Caco-2 (cell line): ENCODE measurements at regions of chr12 and their contacts with region 1.

Region 1: GRCh38 chr12:57111031-57111734 is at the start of gene STAT6:
- DNase-seq: peak in 1 of 2 experiments; percentile 53
- H3K4me3 ChIP-seq: peak within 1 kb of the TSS; percentile 43
- H3K4me3 Mint-ChIP-seq: peak within 1 kb of the TSS; percentile 89
- H3K27ac Mint-ChIP-seq: peak within 1 kb of the TSS; percentile 84
- H3K4me1 ChIP-seq: 0 out of 2 replicates have a peak, but pooled peaks cover 3% of the 10 kb centered on the region
- H3K4me1 Mint-ChIP-seq: peaks cover 13% of the 10 kb centered on the region
- H3K27me3 ChIP-seq: no peaks in the 10 kb centered on the region
- H3K27me3 Mint-ChIP-seq: no peaks in the 10 kb centered on the region
- CTCF ChIP-seq: no peak
- total RNA-seq, gene STAT6: 44.2 and 49.5 TPM in 2 replicates

Region 2: GRCh38 chr12:55908726-55909512 is 1202.3 kb before region 1 on chr12:
- CTCF ChIA-PET with region 1: no interaction called
- POLR2A ChIA-PET with region 1: no interaction called
- intact Hi-C with region 1: no loop called
- DNase-seq: peak; percentile 40 to 59
- H3K4me3 ChIP-seq: no peak overlapping the region
- H3K4me3 Mint-ChIP-seq: peak overlapping the region; percentile 44
- H3K27ac Mint-ChIP-seq: peak overlapping the region; percentile 65
- H3K4me1 ChIP-seq: peaks cover 15% of the 10 kb centered on the region
- H3K4me1 Mint-ChIP-seq: peaks cover 20% of the 10 kb centered on the region
- H3K27me3 ChIP-seq: no peaks in the 10 kb centered on the region
- H3K27me3 Mint-ChIP-seq: no peaks in the 10 kb centered on the region
- CTCF ChIP-seq: no peak

Region 3: GRCh38 chr12:56645204-56645716 is 465.9 kb before region 1 on chr12:
- CTCF ChIA-PET with region 1: no interaction called
- POLR2A ChIA-PET with region 1: no interaction called
- intact Hi-C with region 1: no loop called
- DNase-seq: no peak
- H3K4me3 ChIP-seq: peak overlapping the region; percentile 81
- H3K4me3 Mint-ChIP-seq: peak overlapping the region; percentile 89
- H3K27ac Mint-ChIP-seq: peak overlapping the region; percentile 98
- H3K4me1 ChIP-seq: peaks cover 7% of the 10 kb centered on the region
- H3K4me1 Mint-ChIP-seq: peaks cover 7% of the 10 kb centered on the region
- H3K27me3 ChIP-seq: no peaks in the 10 kb centered on the region
- H3K27me3 Mint-ChIP-seq: no peaks in the 10 kb centered on the region
- CTCF ChIP-seq: no peak

Region 4: DNA sequence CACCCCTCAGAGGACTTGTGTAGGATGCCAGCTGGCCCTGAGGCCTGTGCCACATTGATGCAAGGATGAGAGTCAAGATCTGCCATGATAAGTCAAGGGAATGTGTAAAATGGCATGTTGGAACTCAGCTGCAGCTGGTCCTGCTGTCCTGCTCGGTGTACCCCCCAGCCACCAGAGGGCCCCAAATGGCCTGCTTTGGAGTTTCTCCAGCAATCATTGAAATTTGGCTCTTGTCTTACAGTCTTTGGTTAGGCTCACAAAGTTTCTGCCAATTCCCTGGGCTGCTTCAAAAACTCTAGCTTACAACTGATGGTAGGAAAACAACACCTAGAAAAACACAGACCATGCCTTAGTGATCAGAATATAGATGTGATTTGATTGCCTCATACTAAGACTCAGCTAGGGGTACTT is 271.3 kb before region 1 on chr12:
- CTCF ChIA-PET with region 1: interaction called, 3 read pairs
- POLR2A ChIA-PET with region 1: no interaction called
- intact Hi-C with region 1: loop called (anchors 2 kb)
- DNase-seq: peak; percentile 67 to 77
- H3K4me3 ChIP-seq: no peak overlapping the region
- H3K4me3 Mint-ChIP-seq: no peak overlapping the region
- H3K27ac Mint-ChIP-seq: no peak overlapping the region
- H3K4me1 ChIP-seq: no peaks in the 10 kb centered on the region
- H3K4me1 Mint-ChIP-seq: no peaks in the 10 kb centered on the region
- H3K27me3 ChIP-seq: no peaks in the 10 kb centered on the region
- H3K27me3 Mint-ChIP-seq: peaks cover 7% of the 10 kb centered on the region
- CTCF ChIP-seq: peak; percentile 73 to 88

Region 5: DNA sequence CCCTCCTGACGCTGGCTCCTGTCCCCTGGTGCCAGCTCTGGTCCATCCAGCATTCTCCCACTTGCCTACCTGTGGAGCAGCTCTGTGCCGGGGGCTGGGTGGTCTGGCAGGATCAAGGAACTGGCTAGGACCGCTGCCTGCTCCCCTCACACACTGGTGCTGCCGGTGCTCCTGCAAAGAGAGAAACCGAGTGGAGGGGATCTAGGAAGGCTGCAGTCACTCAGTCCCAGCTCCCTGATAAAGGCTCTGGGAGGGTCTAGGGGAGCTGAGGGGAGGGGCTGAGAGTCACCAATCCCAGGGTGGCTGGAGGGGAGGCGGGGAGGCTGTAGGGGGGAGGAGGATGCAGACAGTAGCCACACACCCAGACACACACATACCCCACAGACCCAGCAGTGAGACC is 94.9 kb before region 1 on chr12 and contains the start of gene TAC3:
- CTCF ChIA-PET with region 1: interaction called, 29 read pairs
- POLR2A ChIA-PET with region 1: interaction called, 11 read pairs
- intact Hi-C with region 1: no loop called
- DNase-seq: peak in 1 of 2 experiments; percentile 41
- H3K4me3 ChIP-seq: no peak within 1 kb of the TSS
- H3K4me3 Mint-ChIP-seq: no peak within 1 kb of the TSS
- H3K27ac Mint-ChIP-seq: no peak within 1 kb of the TSS
- H3K4me1 ChIP-seq: peaks cover 23% of the 10 kb centered on the region
- H3K4me1 Mint-ChIP-seq: peaks cover 16% of the 10 kb centered on the region
- H3K27me3 ChIP-seq: no peaks in the 10 kb centered on the region
- H3K27me3 Mint-ChIP-seq: no peaks in the 10 kb centered on the region
- CTCF ChIP-seq: no peak
- total RNA-seq, gene TAC3: 1.6 and 3.1 TPM in 2 replicates

Region 6: GRCh38 chr12:57069523-57069922 is 41.7 kb before region 1 on chr12:
- CTCF ChIA-PET with region 1: interaction called, 195 read pairs
- POLR2A ChIA-PET with region 1: interaction called, 24 read pairs
- intact Hi-C with region 1: loop called (anchors 1 kb)
- DNase-seq: peak; percentile 66
- H3K4me3 ChIP-seq: no peak overlapping the region
- H3K4me3 Mint-ChIP-seq: no peak overlapping the region
- H3K27ac Mint-ChIP-seq: peak overlapping the region; percentile 5
- H3K4me1 ChIP-seq: no peaks in the 10 kb centered on the region
- H3K4me1 Mint-ChIP-seq: no peaks in the 10 kb centered on the region
- H3K27me3 ChIP-seq: no peaks in the 10 kb centered on the region
- H3K27me3 Mint-ChIP-seq: no peaks in the 10 kb centered on the region
- CTCF ChIP-seq: peak; percentile 81 to 86

Region 7: DNA sequence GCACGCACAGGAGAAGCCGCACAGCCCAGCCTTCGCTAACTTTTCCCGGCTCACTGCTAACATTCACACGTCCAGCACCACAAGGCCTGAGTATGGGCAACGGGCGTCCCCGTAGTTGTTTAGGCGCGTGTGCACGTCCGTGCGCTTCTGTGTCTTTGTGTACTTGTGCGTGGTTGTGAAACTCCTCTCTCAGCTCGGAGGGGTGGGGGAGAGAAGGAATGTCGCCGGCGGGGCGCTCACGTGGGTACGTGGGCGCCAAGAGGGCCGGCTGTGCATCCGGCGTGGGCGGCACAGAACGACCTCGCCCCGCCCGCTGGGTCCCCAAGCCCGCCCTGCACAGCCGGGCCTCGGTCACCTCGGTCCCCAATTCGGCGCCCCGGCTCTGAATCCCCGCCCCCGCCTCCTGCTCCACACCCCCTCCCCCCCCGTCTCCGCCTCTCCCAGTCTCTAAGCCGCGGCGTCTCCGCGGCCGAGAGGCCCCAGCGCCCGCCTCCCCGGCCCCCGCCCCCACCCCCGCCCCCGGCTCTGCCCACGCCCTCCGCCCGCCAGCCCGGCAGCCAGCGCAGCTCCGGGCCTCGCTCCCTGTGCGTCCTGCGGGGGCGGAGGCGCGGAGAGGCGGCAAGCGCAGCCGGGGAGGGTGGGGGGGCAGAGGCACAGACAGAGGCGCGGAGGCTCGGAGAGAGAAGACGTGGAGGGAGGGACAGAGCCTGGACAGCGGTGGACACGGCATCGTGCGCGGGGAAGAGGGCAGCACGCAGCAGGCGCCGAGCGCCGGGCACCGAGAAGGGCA is 22.5 kb before region 1 on chr12 and contains the start of gene NAB2:
- CTCF ChIA-PET with region 1: interaction called, 35 read pairs
- POLR2A ChIA-PET with region 1: interaction called, 56 read pairs
- intact Hi-C with region 1: loop called (anchors 1 kb)
- DNase-seq: peak; percentile 94 to 95
- H3K4me3 ChIP-seq: peak within 1 kb of the TSS; percentile 97
- H3K4me3 Mint-ChIP-seq: peak within 1 kb of the TSS; percentile 78
- H3K27ac Mint-ChIP-seq: peak within 1 kb of the TSS; percentile 98
- H3K4me1 ChIP-seq: peaks cover 24% of the 10 kb centered on the region
- H3K4me1 Mint-ChIP-seq: peaks cover 35% of the 10 kb centered on the region
- H3K27me3 ChIP-seq: no peaks in the 10 kb centered on the region
- H3K27me3 Mint-ChIP-seq: no peaks in the 10 kb centered on the region
- CTCF ChIP-seq: no peak
- total RNA-seq, gene NAB2: 15.7 and 16.4 TPM in 2 replicates

Region 8: GRCh38 chr12:57124259-57124877 is 13.2 kb after region 1 on chr12:
- CTCF ChIA-PET with region 1: interaction called, 40 read pairs
- POLR2A ChIA-PET with region 1: interaction called, 11 read pairs
- intact Hi-C with region 1: no loop called
- DNase-seq: peak; percentile 75 to 82
- H3K4me3 ChIP-seq: no peak overlapping the region
- H3K4me3 Mint-ChIP-seq: no peak overlapping the region
- H3K27ac Mint-ChIP-seq: no peak overlapping the region
- H3K4me1 ChIP-seq: peaks cover 8% of the 10 kb centered on the region
- H3K4me1 Mint-ChIP-seq: peaks cover 8% of the 10 kb centered on the region
- H3K27me3 ChIP-seq: no peaks in the 10 kb centered on the region
- H3K27me3 Mint-ChIP-seq: no peaks in the 10 kb centered on the region
- CTCF ChIP-seq: peak; percentile 86 to 88

Region 9: GRCh38 chr12:57182921-57183790 is 72.0 kb after region 1 on chr12:
- CTCF ChIA-PET with region 1: interaction called, 23 read pairs
- POLR2A ChIA-PET with region 1: no interaction called
- intact Hi-C with region 1: no loop called
- DNase-seq: peak; percentile 79 to 86
- H3K4me3 ChIP-seq: no peak overlapping the region
- H3K4me3 Mint-ChIP-seq: no peak overlapping the region
- H3K27ac Mint-ChIP-seq: no peak overlapping the region
- H3K4me1 ChIP-seq: no peaks in the 10 kb centered on the region
- H3K4me1 Mint-ChIP-seq: peaks cover 17% of the 10 kb centered on the region
- H3K27me3 ChIP-seq: no peaks in the 10 kb centered on the region
- H3K27me3 Mint-ChIP-seq: no peaks in the 10 kb centered on the region
- CTCF ChIP-seq: peak; percentile 74 to 90

Region 10: DNA sequence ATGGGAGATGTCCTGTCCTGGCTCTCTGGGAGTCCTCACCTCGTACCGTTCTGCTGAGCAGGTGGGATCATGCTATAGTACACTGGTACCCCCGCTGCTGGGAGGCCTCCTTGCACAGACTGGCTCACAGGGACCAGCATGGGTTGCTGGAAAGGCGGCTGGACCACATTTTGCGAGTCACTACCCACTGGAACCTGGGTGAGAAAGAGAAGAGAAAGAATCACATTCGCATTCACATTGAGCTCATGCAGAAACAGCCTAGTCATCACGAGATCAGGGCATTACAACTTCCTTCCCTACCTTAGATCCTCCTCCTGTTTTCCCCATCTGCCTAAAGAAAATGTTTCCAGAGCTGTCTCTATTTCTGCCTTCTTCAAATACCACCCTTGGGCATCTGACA is 157.1 kb after region 1 on chr12:
- CTCF ChIA-PET with region 1: no interaction called
- POLR2A ChIA-PET with region 1: no interaction called
- intact Hi-C with region 1: no loop called
- DNase-seq: no peak
- H3K4me3 ChIP-seq: no peak overlapping the region
- H3K4me3 Mint-ChIP-seq: no peak overlapping the region
- H3K27ac Mint-ChIP-seq: no peak overlapping the region
- H3K4me1 ChIP-seq: no peaks in the 10 kb centered on the region
- H3K4me1 Mint-ChIP-seq: no peaks in the 10 kb centered on the region
- H3K27me3 ChIP-seq: no peaks in the 10 kb centered on the region
- H3K27me3 Mint-ChIP-seq: no peaks in the 10 kb centered on the region
- CTCF ChIP-seq: no peak